ENCODE measurements at regions of chr5 and their contacts with region 1.

Region 1: DNA sequence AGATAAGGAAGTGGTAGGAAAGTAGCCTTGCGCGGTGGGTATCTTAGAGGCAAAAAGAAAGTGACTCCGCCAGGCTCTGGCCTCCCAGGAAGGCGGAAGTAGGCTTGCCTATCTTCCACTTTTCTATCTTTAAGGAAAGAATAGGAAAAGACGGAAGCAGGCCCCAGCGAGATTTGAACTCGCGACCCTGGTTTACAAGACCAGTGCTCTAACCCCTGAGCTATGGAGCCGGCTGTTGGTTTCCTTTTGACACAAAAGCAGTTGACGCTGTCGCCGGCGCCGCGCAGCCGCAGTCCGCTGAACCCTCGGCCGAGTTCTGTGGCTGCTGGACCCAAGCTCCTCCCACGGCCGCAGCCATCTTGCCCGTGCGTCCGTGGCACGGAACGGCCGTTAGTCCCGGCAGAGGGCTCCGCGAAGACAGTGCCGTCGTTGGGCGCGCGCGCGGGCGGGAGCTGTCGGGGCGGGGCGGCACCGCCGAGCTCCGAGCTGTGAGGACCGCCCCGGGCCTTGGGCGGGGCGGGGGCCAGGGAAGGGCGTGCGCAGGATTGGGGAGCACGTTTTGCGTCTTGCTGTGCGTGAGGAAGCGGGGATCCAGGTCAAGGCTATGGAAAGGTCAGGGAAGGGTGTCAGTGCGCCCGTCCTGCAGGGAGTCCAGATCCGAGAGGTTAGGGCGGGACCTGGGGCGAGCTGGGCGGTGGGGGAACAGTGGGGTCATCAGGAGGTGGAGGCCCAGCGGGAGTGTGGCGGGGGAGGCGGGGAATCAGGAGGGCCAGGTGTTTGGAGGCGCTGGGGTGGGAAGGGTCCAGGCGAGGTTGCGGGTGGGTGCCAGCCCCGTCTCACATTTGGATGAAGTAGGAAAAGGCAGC is 13.2 kb downstream of the TRIM7 start:
- DNase-seq: peak; percentile 65 to 96
- ATAC-seq: peak; percentile 48 to 69
- H3K4me3 ChIP-seq: peak overlapping the region; percentile 82
- H3K27ac ChIP-seq: peak overlapping the region; percentile 96
- H3K4me1 ChIP-seq: peaks cover 12% of the 10 kb centered on the region
- CTCF ChIP-seq: no peak
- EP300 ChIP-seq: no peak
- POLR2A ChIP-seq: peak; percentile 71
- RAD21 ChIP-seq: 0 out of 5 replicates have a peak, but pooled peaks of 1 of the 2 experiments have one; percentile 29

Region 2: DNA sequence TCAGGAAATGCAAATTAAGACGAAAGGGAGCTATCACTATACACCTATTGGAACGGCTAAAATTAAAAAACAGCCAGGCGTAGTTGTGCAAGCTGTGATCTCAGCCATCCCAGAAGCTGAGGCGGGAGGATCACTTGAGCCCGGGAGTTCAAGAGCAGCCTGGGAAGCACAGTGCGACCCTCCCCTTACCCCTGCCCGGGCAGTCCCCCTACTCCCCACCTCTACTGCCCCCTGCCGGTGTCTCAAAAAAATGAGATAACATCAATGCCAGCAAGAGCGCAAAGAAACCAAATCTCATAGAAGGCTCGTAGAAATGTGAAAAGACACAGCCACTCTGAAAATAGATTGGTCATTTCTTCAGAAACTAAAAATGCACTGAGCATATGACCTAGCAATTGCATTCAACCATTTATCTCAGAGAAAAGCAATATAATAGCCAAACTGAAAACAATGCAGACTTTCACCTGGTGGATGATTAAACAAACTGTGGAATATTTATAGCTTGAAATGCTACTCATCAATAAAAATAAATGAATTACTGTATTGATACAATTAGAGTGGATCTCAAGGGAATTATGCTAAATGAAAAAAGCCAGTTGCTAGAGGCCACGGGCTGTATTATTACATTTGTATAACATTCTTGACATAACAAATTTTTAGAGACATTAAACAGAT is 23.8 kb before region 1 on chr5:
- CTCF ChIA-PET with region 1: interaction called, 24 read pairs
- POLR2A ChIA-PET with region 1: interaction called, 17 read pairs
- DNase-seq: peak in 1 of 2 experiments; percentile 70
- ATAC-seq: no peak
- H3K4me3 ChIP-seq: peak overlapping the region; percentile 13; the same call in 1 of the 3 replicates
- H3K27ac ChIP-seq: 0 out of 6 replicates have a peak overlapping the region, but pooled peaks of 1 of the 2 experiments have one; percentile 33
- H3K4me1 ChIP-seq: peaks cover 29% of the 10 kb centered on the region
- CTCF ChIP-seq: peak; percentile 73
- EP300 ChIP-seq: no peak
- POLR2A ChIP-seq: no peak
- RAD21 ChIP-seq: peak; percentile 43 to 46; a peak in 4 of 5 replicates

Region 3: DNA sequence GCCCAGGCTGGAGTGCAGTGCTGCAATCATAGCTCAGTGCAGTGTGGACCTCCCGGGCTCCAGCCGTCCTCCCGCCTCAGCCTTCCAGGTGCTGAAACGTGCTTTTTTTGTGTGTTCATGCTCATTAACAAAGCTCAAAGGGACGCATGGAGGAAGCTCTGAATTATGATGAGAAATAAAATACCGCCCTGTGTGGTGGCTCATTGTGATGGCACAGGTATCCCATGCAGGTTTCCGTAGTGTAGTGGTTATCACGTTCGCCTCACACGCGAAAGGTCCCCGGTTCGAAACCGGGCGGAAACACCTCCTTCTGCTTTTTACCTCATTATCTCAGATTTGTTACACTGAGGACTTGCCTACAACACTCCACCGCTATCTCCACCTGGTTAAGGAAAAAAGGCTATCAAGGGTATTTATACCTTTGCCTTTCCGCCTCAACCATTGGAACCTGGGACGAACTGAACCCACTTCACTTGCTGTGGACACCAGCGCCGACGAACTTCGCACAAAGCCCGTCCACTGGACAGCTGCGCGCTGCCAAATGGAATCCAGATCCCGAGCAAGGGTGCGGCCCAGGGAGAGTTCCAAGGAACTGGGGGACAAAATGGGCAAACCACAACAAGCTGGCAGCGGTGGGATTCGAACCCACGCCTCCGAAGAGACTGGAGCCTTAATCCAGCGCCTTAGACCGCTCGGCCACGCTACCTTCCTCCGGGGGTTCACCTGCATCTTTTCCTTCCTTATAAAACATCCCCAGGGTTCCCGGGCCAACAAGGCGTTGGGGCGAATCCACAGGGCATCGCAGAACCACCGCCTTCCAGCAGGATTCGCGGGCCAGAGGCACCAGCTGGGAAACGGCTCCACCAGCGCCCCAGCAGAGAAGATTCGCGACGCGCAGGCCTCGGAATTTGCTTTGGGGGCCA is 18.1 kb before region 1 on chr5:
- CTCF ChIA-PET with region 1: interaction called, 24 read pairs
- POLR2A ChIA-PET with region 1: interaction called, 17 read pairs
- DNase-seq: peak; percentile 84 to 99
- ATAC-seq: peak; percentile 84 to 87
- H3K4me3 ChIP-seq: peak overlapping the region; percentile 50
- H3K27ac ChIP-seq: peak overlapping the region; percentile 76 to 87
- H3K4me1 ChIP-seq: peaks cover 21% of the 10 kb centered on the region
- CTCF ChIP-seq: peak; percentile 5; the same call in 1 of the 3 replicates
- EP300 ChIP-seq: no peak
- POLR2A ChIP-seq: no peak
- RAD21 ChIP-seq: 0 out of 5 replicates have a peak, but pooled peaks of 1 of the 2 experiments have one; percentile 1

Region 4: GRCh38 chr5:181223058-181223728 is 31.4 kb after region 1 on chr5 and contains the start of gene TRIM41:
- CTCF ChIA-PET with region 1: interaction called, 5 read pairs
- POLR2A ChIA-PET with region 1: interaction called, 48 read pairs
- DNase-seq: peak; percentile 93 to 99
- ATAC-seq: peak; percentile 72 to 78
- H3K4me3 ChIP-seq: peak within 1 kb of the TSS; percentile 90
- H3K27ac ChIP-seq: peak within 1 kb of the TSS; percentile 95 to 98
- H3K4me1 ChIP-seq: peaks cover 16% of the 10 kb centered on the region
- CTCF ChIP-seq: no peak
- EP300 ChIP-seq: no peak
- POLR2A ChIP-seq: peak; percentile 60
- RAD21 ChIP-seq: 0 out of 5 replicates have a peak, but pooled peaks of 1 of the 2 experiments have one; percentile 15
- polyA plus RNA-seq, gene TRIM41: 17.0 and 22.7 TPM in 2 replicates

Measured in A549 (cell line).